Activated T-helper 1 cell treated with anti-CD3 and anti-CD28 coated beads, Interleukin-12 subunit alpha, Interleukin-12 subunit beta, Interleukin-2, Interleukin-4 antibody, amounts not matched to agents 30 ng/mL and 10 ng/mL and 1 ng/mL, durations not matched to agents 14 hours and 24 hours and 36 hours (primary cell): ENCODE measurements at regions of chr5 and their contacts with region 1.

Region 1: GRCh38 chr5:43313035-43313853 is at the start of gene HMGCS1:
- DNase-seq: peak; percentile 99
- H3K4me3 Mint-ChIP-seq: peak within 1 kb of the TSS; percentile 93
- H3K27ac Mint-ChIP-seq: peak within 1 kb of the TSS; percentile 98
- H3K4me1 Mint-ChIP-seq: peaks cover 73% of the 10 kb centered on the region
- H3K27me3 Mint-ChIP-seq: no peaks in the 10 kb centered on the region
- total RNA-seq, gene HMGCS1: 216 and 218 TPM in 2 replicates

Region 2: GRCh38 chr5:41903892-41904799 is 1409.1 kb before region 1 on chr5 and contains the start of gene RIMOC1:
- intact Hi-C with region 1: loop called (anchors 5 kb)
- DNase-seq: peak; percentile 98
- H3K4me3 Mint-ChIP-seq: peak within 1 kb of the TSS; percentile 99
- H3K27ac Mint-ChIP-seq: peak within 1 kb of the TSS; percentile 100
- H3K4me1 Mint-ChIP-seq: peaks cover 54% of the 10 kb centered on the region
- H3K27me3 Mint-ChIP-seq: peaks cover 10% of the 10 kb centered on the region
- total RNA-seq, gene RIMOC1: 28.0 and 29.0 TPM in 2 replicates

Region 3: GRCh38 chr5:41940641-41941040 is 1372.6 kb before region 1 on chr5:
- intact Hi-C with region 1: no loop called
- DNase-seq: no peak
- H3K4me3 Mint-ChIP-seq: no peak overlapping the region
- H3K27ac Mint-ChIP-seq: no peak overlapping the region
- H3K4me1 Mint-ChIP-seq: no peaks in the 10 kb centered on the region
- H3K27me3 Mint-ChIP-seq: no peaks in the 10 kb centered on the region

Region 4: DNA sequence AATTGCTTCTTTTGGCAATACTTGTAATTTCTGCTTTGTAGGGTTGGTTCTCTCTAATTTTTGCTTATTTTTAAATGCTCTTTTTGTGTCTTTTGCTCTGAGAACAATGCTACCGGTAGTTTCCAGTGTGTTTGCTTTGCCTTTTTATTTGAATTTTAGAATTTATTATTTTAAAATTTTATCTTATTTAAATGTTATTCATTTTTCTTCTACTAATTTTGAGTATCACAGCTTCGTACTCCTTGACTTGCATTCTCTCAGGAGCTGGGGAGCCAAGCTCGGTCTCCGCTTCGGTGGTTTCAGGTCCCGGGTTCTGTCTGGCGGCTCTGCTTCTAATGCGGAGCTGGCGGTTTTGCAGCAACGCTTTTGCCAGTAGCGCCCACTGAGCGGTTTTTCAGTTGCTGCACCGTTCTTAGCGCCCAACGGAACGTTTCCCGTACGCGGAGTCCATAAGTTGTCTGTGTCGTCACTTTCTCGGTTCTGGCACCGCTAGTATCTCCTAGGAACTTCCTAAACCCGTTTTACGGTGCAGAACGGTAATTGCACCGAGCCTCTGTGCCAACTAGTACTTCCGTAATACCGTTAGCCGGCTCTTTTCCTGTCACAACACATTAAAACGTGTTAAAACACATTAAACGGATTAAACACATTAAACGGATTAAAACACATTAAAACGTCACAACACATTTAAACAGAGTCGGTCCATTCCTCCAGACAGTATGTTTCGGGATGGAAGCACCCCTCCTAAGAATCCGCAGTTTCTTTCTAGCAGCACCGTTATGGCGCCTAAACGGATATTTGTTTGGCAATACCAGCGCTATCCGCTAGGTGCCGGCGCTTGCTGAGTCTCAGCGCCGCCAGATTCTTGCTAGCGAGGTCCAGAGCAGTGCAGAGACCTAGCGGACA is 318.7 kb before region 1 on chr5:
- intact Hi-C with region 1: loop called (anchors 2 kb)
- DNase-seq: peak; percentile 84
- H3K4me3 Mint-ChIP-seq: peak overlapping the region; percentile 98
- H3K27ac Mint-ChIP-seq: peak overlapping the region; percentile 100
- H3K4me1 Mint-ChIP-seq: peaks cover 60% of the 10 kb centered on the region
- H3K27me3 Mint-ChIP-seq: peaks cover 3% of the 10 kb centered on the region

Region 5: DNA sequence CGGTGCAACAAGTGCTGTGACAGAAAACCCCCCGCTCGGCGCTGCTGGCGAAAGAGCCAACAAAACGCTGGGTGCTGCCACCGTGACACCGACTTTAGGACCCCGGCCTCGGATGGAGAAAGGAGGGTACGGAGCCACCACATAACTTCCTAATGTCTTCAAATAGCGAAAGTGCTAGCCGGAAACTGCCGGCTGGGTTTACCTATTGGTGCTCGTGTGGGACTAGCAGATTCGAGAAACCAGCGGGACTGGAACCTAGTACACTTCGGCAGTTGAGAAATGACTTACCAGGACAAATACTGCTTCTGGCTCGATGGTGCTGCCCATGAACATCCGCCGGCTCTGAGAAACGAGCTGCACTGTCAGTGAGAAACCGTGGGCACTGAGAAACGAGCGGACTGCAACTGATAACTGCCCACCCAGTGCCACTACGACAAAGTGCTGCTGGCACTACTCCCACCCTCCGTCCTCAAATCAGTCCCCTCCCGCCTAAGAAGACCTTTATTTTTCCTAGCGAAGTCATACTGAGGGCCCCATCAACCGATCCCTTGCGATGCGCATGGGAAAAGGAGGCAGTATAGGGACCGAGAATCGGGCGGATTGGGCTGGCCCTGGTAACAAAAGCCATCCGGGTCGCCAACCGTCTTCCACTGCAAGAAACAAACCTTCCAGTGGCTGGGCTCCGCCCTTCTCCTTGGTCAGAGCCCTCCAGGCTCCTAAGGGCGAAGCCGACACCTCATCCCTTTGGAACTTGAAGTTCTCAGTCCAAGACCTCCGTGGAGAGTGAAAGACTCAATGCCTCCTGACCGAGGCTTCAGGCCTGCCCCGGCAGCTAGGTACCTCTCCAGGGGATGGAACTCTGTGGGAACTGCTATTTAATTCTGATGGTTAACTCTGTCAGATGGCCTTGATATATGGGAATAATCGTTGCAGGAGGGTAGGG is 246.2 kb before region 1 on chr5:
- intact Hi-C with region 1: loop called (anchors 1 kb)
- DNase-seq: peak; percentile 78
- H3K4me3 Mint-ChIP-seq: peak overlapping the region; percentile 99
- H3K27ac Mint-ChIP-seq: peak overlapping the region; percentile 100
- H3K4me1 Mint-ChIP-seq: peaks cover 47% of the 10 kb centered on the region
- H3K27me3 Mint-ChIP-seq: peaks cover 3% of the 10 kb centered on the region

Region 6: DNA sequence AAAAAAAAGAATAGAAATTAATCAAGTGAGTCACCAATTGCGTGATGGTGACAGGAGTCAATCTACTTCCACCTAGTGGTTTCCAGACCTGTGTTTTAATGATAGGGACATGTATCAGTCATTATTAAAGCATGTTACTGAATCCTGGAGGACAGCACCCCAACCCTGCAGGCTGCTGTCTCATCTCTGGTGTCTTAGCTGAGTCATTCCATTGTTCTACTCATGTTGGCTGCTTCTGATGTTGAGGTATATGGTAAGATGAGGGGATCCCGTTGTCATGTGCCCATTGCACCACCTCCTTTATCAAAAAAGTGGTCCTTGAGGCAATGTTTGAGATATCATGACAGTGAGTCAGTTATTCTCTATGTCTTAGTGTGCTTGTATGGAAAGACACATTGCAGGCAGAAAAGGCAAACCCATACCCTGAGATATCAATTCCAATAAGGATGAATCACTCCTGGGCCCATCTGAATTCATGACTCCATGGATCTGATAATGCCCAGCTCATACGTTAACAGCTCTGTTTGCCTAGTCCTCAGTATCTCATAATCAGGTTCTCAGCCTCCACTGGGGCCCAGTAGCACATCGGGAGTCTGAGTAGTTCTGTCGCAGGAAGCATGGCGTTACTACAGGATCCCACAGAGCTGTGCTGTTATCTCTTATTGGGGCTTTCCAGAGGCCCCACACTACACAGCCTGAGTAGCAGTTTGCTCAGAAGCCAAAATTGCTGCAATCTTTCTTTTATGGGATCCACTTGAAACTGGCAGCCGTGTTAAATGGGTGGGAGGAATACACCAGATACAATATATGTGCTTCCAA is 31.2 kb before region 1 on chr5:
- intact Hi-C with region 1: no loop called
- DNase-seq: no peak
- H3K4me3 Mint-ChIP-seq: no peak overlapping the region
- H3K27ac Mint-ChIP-seq: no peak overlapping the region
- H3K4me1 Mint-ChIP-seq: no peaks in the 10 kb centered on the region
- H3K27me3 Mint-ChIP-seq: no peaks in the 10 kb centered on the region

Region 7: GRCh38 chr5:43294226-43294625 is 19.0 kb before region 1 on chr5:
- intact Hi-C with region 1: no loop called
- DNase-seq: no peak
- H3K4me3 Mint-ChIP-seq: no peak overlapping the region
- H3K27ac Mint-ChIP-seq: no peak overlapping the region
- H3K4me1 Mint-ChIP-seq: peaks cover 40% of the 10 kb centered on the region
- H3K27me3 Mint-ChIP-seq: no peaks in the 10 kb centered on the region

Region 8: GRCh38 chr5:43336159-43336558 is 22.9 kb after region 1 on chr5:
- intact Hi-C with region 1: loop called (anchors 1 kb)
- DNase-seq: no peak
- H3K4me3 Mint-ChIP-seq: no peak overlapping the region
- H3K27ac Mint-ChIP-seq: peak overlapping the region; percentile 61
- H3K4me1 Mint-ChIP-seq: peaks cover 8% of the 10 kb centered on the region
- H3K27me3 Mint-ChIP-seq: peaks cover 6% of the 10 kb centered on the region

Region 9: GRCh38 chr5:43357067-43357466 is 43.8 kb after region 1 on chr5:
- intact Hi-C with region 1: no loop called
- DNase-seq: no peak
- H3K4me3 Mint-ChIP-seq: no peak overlapping the region
- H3K27ac Mint-ChIP-seq: no peak overlapping the region
- H3K4me1 Mint-ChIP-seq: no peaks in the 10 kb centered on the region
- H3K27me3 Mint-ChIP-seq: peaks cover 2% of the 10 kb centered on the region

Region 10: DNA sequence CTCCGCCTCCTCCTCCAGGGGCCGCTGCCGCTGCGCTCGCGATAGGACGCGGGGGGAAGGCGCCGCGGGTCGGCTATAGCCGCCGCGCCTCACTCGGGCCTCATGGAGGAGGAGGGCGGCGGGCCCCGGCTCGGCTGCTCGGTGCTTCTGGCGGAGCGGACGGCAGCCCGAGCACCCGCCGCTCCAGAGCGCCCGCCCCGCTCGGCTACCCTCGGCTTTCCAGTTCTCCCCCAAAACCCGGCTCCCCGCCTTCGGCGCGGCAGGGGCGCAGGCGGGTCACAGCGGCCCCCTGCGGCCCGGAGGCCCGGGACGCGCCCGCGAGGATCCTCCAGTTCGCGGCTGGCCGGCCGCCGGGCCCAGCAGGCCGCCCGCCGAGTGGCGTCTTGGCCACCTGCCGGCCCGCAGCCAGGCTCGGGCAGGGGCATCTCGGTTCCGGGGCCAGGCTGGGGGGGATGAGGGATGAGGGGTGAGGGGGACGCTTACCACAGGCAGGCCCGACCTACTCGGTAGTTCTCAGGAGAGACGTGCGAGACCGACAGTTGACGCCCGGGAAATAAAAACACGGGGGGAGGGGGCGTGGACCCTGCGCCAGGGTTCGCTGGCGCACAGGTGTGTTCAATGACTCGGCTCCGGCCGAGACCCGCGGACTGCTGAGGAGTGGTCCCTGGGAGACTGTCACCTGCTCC is 243.8 kb after region 1 on chr5 and contains the start of gene PAIP1:
- intact Hi-C with region 1: loop called (anchors 1 kb)
- DNase-seq: peak; percentile 83
- H3K4me3 Mint-ChIP-seq: peak within 1 kb of the TSS; percentile 92
- H3K27ac Mint-ChIP-seq: peak within 1 kb of the TSS; percentile 93
- H3K4me1 Mint-ChIP-seq: peaks cover 10% of the 10 kb centered on the region
- H3K27me3 Mint-ChIP-seq: no peaks in the 10 kb centered on the region
- total RNA-seq, gene PAIP1: 59.0 and 60.8 TPM in 2 replicates